Heart left ventricle (tissue), 16 donors: ENCODE measurements at regions of chr14 and their contacts with region 1.

Region 1: DNA sequence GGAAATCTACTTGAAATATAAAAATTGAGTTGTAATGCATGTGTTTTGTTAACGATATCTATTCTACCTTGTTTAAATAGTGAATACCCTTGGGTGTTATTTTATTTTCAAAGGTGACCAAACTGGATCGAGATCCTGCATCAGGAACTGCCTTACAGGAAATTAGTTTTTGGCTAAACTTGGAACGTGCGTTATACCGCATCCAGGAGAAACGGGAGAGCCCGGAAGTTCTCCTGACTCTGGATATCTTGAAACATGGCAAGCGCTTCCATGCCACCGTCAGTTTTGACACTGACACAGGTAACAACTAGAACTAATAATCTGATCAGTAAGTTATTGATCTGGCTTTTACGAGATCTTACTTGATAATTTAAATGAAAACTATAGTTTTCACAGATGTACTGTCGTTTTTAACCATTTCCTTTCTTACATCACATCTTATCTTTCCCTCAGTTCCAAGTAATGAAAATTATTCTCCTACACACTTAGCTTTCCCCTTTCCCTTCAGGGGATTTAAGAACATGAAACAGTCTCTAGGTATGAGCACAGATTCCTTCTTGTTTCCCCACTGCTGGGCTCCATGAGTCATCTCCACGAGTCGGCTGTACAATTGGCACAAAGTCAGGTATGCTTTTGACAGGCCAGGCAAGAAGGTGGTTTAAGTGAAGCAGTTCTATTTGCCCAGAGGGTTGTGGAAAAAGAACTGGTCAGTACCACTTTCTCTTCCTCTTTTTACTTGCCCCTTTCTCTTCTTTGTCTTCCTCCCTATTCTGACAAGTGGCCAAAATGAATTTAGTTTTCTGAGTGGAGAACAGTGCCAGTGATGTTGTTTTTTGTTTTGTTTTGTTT is 16.1 kb downstream of the DYNC1H1 start:
- DNase-seq: peak in 3 of 5 donors; percentile 43 to 70 (median 46)
- ATAC-seq: peak; percentile 75 to 94 (median 94)
- H3K4me3 ChIP-seq: no peak overlapping the region
- H3K27ac ChIP-seq: peak overlapping the region in 9 of 12 donors; percentile 5 to 75 (median 57)
- H3K4me1 ChIP-seq: peaks cover 0 to 18% (median 10%) of the 10 kb centered on the region in 12 donors
- H3K27me3 ChIP-seq: no peaks in the 10 kb centered on the region
- CTCF ChIP-seq: no peak
- POLR2A ChIP-seq: no peak

Region 2: GRCh38 chr14:102028421-102029172 is 48.1 kb after region 1 on chr14:
- intact Hi-C with region 1: loop called in 3 of 10 experiments (anchors 5 to 10 kb)
- DNase-seq: no peak
- ATAC-seq: peak in 2 of 4 donors; percentile 23 to 26
- H3K4me3 ChIP-seq: no peak overlapping the region
- H3K27ac ChIP-seq: no peak overlapping the region
- H3K4me1 ChIP-seq: no peaks in the 10 kb centered on the region
- H3K27me3 ChIP-seq: no peaks in the 10 kb centered on the region
- CTCF ChIP-seq: no peak
- POLR2A ChIP-seq: no peak